ENCODE measurements at regions of chr17 and their contacts with region 1.

Region 1: DNA sequence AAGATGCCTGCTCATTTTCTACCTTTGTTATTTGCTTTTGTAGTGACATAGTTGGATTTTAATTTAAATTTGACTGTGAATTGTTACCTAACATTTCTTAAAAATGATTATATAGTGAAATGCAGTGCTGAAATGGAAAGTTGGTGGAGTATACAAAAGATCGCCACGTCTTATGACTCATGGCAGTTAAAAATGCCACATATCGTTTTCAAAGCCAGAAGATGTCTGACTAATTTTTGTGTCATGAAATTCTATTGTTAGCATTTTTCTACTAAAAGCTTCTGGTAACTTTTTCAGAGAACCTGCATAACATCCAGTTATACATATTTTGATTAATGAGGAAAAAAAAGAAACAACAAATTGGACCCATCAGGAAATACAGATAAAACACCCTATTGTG is 20.6 kb downstream of the MAP2K4 start:
- DNase-seq: peak; percentile 76
- H3K4me3 ChIP-seq: peak overlapping the region; percentile 3 to 8 (median 7)
- H3K27ac ChIP-seq: no peak overlapping the region
- H3K4me1 ChIP-seq: peaks cover 30% of the 10 kb centered on the region
- H3K27me3 ChIP-seq: no peaks in the 10 kb centered on the region
- CTCF ChIP-seq: no peak

Region 2: DNA sequence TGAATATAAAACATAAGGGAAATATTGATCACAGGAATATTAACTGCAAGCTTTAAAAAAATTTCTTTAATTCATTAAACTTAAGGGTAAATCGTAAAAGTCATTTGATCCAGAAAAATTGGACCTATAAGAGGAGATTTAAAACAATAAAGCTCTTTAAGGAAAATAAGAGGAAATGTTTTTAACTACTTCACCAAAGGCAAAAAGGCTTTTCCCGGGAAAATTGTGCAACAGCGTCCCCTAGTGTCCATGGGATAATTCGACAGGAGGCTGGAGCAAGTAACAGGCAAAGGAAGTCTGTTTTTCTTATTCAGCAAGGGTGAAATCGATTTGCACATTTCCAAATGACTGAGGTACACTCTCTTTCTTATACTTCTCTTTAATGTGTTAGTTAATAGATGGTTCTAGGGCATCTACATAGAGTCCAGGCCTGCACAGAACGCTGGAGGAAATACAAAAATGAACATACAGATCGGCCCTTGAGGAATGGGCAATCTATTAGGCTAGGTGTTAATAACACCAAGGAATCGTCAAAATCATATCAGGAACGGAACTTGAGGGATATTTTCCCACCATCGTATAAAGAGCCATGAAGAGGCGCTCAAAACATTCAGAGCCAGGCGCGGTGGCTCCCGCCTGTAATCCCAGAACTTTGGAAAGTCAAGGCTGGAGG is 105.4 kb before region 1 on chr17:
- CTCF ChIA-PET with region 1: no interaction called
- dilution Hi-C with region 1: no loop called
- in situ Hi-C with region 1: no loop called
- intact Hi-C with region 1: no loop called
- DNase-seq: peak; percentile 51
- H3K4me3 ChIP-seq: no peak overlapping the region
- H3K27ac ChIP-seq: no peak overlapping the region
- H3K4me1 ChIP-seq: no peaks in the 10 kb centered on the region
- H3K27me3 ChIP-seq: no peaks in the 10 kb centered on the region
- CTCF ChIP-seq: peak; percentile 99

Region 3: DNA sequence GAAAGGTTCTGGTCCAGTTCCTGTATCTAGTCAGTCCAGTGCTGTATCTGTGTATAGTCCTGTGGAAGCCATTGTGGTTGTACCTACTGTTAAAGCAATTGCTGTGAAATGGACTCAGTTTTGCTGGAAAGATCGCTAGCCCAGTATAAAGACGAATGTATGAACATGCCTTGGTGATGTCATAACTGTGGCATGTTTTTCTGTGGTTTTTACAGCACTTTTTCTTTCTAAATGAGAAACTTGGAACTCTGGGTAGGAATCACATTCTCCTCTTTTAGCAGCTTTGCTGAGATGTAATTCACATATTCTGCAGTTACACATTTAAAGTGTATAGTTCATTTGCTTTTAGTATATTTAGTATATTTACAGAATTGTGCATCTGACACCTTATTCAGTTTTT is 37.5 kb after region 1 on chr17:
- CTCF ChIA-PET with region 1: no interaction called
- dilution Hi-C with region 1: no loop called
- in situ Hi-C with region 1: no loop called
- intact Hi-C with region 1: loop called (anchors 5 kb)
- DNase-seq: peak; percentile 72
- H3K4me3 ChIP-seq: peak overlapping the region in 1 of 3 experiments; percentile 8
- H3K27ac ChIP-seq: peak overlapping the region; percentile 32
- H3K4me1 ChIP-seq: peaks cover 19% of the 10 kb centered on the region
- H3K27me3 ChIP-seq: no peaks in the 10 kb centered on the region
- CTCF ChIP-seq: no peak